Activated CD4-positive, alpha-beta T cell treated with anti-CD3 and anti-CD28 coated beads for 36 hours (primary cell): ENCODE measurements at regions of chr3 and their contacts with region 1.

Region 1: GRCh38 chr3:139935016-139935865 is at the start of gene CLSTN2:
- DNase-seq: peak; percentile 69
- ATAC-seq: peak; percentile 70
- H3K4me3 Mint-ChIP-seq: no peak within 1 kb of the TSS
- H3K27ac Mint-ChIP-seq: no peak within 1 kb of the TSS
- H3K4me1 Mint-ChIP-seq: peaks cover 9% of the 10 kb centered on the region
- H3K27me3 Mint-ChIP-seq: peaks cover 45% of the 10 kb centered on the region
- total RNA-seq, gene CLSTN2: not detected

Region 2: DNA sequence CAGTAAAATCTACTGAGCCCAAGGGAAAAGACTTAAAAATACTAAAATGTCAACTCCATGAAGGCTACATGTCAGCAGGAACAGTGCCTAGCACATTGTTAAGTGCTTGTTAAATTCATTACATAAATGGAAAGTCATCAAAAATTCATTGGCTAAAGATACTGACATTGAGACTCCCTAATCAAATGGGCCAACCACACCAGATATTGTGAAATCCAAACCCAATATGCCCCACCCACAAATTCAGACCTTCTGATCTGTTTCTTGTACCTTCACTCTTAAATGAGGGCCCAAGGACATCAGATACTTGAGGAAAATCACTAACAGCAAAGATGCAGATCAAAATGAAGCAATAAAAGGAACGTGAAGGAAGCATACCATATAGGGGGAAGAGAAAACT is 570.7 kb before region 1 on chr3:
- CTCF ChIA-PET with region 1: no interaction called
- POLR2A ChIA-PET with region 1: no interaction called
- intact Hi-C with region 1: no loop called
- DNase-seq: no peak
- ATAC-seq: no peak
- H3K4me3 Mint-ChIP-seq: no peak overlapping the region
- H3K27ac Mint-ChIP-seq: peak overlapping the region; percentile 1
- H3K4me1 Mint-ChIP-seq: peaks cover 8% of the 10 kb centered on the region
- H3K27me3 Mint-ChIP-seq: no peaks in the 10 kb centered on the region

Region 3: DNA sequence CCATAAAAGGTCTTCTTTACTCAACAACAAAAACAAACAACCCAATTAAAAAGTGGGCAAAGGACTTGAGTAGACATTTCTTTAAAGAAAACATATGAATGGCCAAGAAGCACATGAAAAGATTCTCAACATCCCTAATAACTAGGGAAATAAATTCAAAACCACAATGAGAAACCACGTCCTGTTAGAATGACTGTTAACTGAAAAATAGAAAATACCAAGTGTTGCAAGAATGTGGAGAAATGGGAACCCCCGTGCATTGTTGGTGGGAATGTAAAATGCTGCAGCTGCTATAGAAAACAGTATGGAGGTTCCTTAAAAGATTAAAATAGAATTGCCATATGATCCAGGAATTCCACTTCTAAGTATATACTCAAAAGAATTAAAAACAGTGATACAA is 292.2 kb before region 1 on chr3:
- CTCF ChIA-PET with region 1: no interaction called
- POLR2A ChIA-PET with region 1: no interaction called
- intact Hi-C with region 1: no loop called
- DNase-seq: no peak
- ATAC-seq: no peak
- H3K4me3 Mint-ChIP-seq: no peak overlapping the region
- H3K27ac Mint-ChIP-seq: no peak overlapping the region
- H3K4me1 Mint-ChIP-seq: peaks cover 9% of the 10 kb centered on the region
- H3K27me3 Mint-ChIP-seq: no peaks in the 10 kb centered on the region

Region 4: DNA sequence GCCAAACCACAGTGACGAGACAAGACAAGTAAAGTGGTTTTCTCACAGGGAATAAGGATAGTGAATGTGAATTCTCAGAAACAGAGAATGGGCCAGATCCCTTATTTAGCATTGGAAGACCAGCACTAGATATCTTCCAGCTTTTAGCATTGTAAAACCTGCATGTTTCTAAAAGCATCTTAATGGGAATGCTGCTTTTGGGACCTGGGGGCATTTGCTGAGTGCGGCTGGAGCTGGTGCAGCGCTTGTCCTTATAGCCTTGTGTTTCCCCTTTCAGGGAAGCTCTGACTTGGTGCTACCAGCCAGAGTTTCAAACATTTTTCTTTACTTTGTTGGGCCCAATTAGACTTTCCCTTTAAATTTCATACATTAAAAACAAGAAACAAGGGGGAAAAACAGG is 52.7 kb after region 1 on chr3:
- CTCF ChIA-PET with region 1: no interaction called
- POLR2A ChIA-PET with region 1: no interaction called
- intact Hi-C with region 1: no loop called
- DNase-seq: no peak
- ATAC-seq: no peak
- H3K4me3 Mint-ChIP-seq: no peak overlapping the region
- H3K27ac Mint-ChIP-seq: no peak overlapping the region
- H3K4me1 Mint-ChIP-seq: no peaks in the 10 kb centered on the region
- H3K27me3 Mint-ChIP-seq: peaks cover 10% of the 10 kb centered on the region

Region 5: DNA sequence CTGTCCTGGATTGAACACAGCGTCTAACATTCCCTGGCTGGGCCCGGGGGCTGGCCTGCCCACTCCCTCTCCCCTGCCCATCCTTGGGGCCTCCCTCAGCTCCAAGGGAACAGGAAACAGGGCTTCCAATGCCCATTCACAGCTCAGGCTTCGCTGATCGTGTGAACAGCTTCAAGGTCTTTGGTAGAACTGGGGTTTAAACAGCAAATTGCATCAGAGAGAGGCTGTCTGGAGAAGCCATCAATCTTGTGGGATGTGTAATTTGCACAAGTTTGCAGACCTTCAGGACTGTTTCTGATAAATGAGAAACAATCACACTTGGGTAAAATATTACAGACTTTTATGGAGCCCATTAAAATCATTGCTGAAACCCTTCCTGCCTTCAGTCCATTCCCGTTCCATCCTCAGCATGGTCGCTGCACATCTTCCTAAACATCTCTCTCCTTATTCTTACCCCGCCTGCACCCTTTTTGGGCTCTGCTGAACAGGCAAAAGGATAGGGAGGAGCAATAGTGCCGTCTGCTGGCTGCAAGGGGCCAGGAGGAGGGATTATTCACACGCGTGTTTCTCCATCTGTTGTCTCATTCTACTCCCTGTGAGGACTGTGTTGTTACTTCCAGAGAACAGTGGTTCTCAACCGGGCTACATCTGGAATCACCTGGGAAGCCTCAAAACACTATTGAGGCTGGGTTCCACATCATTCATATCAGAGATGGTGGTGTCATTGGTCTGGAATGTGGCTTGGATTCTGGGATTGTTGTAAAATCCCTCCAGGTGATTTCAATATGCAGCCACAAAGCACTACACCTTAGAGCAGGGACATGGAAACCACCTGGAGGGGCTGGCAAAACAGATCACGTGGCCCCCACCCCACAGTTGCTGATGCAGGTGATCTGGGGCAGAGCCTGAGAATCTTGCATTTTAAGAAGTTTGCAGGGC is 116.0 kb after region 1 on chr3:
- CTCF ChIA-PET with region 1: no interaction called
- POLR2A ChIA-PET with region 1: no interaction called
- intact Hi-C with region 1: loop called in 1 of 2 experiments (anchors 1 kb)
- DNase-seq: peak; percentile 23
- ATAC-seq: no peak
- H3K4me3 Mint-ChIP-seq: no peak overlapping the region
- H3K27ac Mint-ChIP-seq: no peak overlapping the region
- H3K4me1 Mint-ChIP-seq: no peaks in the 10 kb centered on the region
- H3K27me3 Mint-ChIP-seq: peaks cover 16% of the 10 kb centered on the region

Region 6: GRCh38 chr3:140360333-140360732 is 425.1 kb after region 1 on chr3:
- CTCF ChIA-PET with region 1: no interaction called
- POLR2A ChIA-PET with region 1: no interaction called
- intact Hi-C with region 1: no loop called
- DNase-seq: no peak
- ATAC-seq: no peak
- H3K4me3 Mint-ChIP-seq: no peak overlapping the region
- H3K27ac Mint-ChIP-seq: no peak overlapping the region
- H3K4me1 Mint-ChIP-seq: no peaks in the 10 kb centered on the region
- H3K27me3 Mint-ChIP-seq: peaks cover 3% of the 10 kb centered on the region